GM12878 (cell line): ENCODE measurements at regions of chr4 and their contacts with region 1.

Region 1: DNA sequence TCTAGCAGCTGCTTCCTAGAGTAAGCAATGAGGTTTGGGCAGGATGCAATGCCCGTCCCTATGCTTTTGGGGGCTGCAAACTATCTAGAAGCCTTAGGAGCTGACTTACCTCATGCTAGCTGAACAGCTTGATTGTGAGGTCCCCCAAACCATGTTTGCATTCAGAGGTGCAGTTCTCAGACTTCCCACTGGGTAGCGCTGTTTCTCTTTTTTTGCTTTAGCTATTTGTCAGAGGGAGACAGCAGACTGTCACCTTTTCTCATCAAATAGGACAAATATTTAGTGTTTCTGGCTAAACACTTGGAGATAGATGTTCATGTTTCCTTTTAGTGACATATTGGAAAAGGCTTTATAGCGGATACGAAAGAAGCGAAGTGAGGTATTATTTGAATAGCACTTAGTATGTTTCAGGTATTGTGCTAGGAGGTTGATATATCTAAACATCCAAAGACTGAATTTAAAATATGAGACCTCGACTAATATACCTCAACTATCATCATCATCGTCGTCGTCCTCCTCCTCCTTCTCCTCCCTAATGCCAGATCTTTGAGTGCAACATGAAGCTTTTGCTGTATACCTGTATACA is 18.7 kb upstream of the TMEM192 start:
- DNase-seq: peak; percentile 41
- ATAC-seq: peak; percentile 96
- H3K4me3 ChIP-seq: no peak overlapping the region
- H3K27ac ChIP-seq: no peak overlapping the region
- H3K4me1 ChIP-seq: peaks cover 5% of the 10 kb centered on the region
- H3K27me3 ChIP-seq: peaks cover 0 to 2% of the 10 kb centered on the region in 2 experiments; a peak in 2 of 4 replicates
- CTCF ChIP-seq: peak; percentile 85 to 96 (median 88)
- EP300 ChIP-seq: no peak
- POLR2A ChIP-seq: no peak
- RAD21 ChIP-seq: peak; percentile 100

Region 2: GRCh38 chr4:164229255-164229654 is 902.1 kb before region 1 on chr4:
- CTCF ChIA-PET with region 1: no interaction called
- POLR2A ChIA-PET with region 1: no interaction called
- RAD21 ChIA-PET with region 1: no interaction called
- SMC1A ChIA-PET with region 1: no interaction called
- in situ Hi-C with region 1: no loop called
- intact Hi-C with region 1: no loop called
- DNase-seq: no peak
- ATAC-seq: no peak
- H3K4me3 ChIP-seq: no peak overlapping the region
- H3K27ac ChIP-seq: no peak overlapping the region
- H3K4me1 ChIP-seq: no peaks in the 10 kb centered on the region
- H3K27me3 ChIP-seq: no peaks in the 10 kb centered on the region
- CTCF ChIP-seq: no peak
- EP300 ChIP-seq: no peak
- POLR2A ChIP-seq: no peak
- RAD21 ChIP-seq: no peak

Region 3: GRCh38 chr4:164509951-164510350 is 621.4 kb before region 1 on chr4:
- CTCF ChIA-PET with region 1: no interaction called
- POLR2A ChIA-PET with region 1: no interaction called
- RAD21 ChIA-PET with region 1: no interaction called
- SMC1A ChIA-PET with region 1: no interaction called
- in situ Hi-C with region 1: no loop called
- intact Hi-C with region 1: no loop called
- DNase-seq: no peak
- ATAC-seq: no peak
- H3K4me3 ChIP-seq: no peak overlapping the region
- H3K27ac ChIP-seq: no peak overlapping the region
- H3K4me1 ChIP-seq: no peaks in the 10 kb centered on the region
- H3K27me3 ChIP-seq: no peaks in the 10 kb centered on the region; a peak in 1 of 4 replicates
- CTCF ChIP-seq: no peak
- EP300 ChIP-seq: no peak
- POLR2A ChIP-seq: no peak
- RAD21 ChIP-seq: no peak

Region 4: GRCh38 chr4:164639001-164639400 is 492.3 kb before region 1 on chr4:
- CTCF ChIA-PET with region 1: no interaction called
- POLR2A ChIA-PET with region 1: no interaction called
- RAD21 ChIA-PET with region 1: no interaction called
- SMC1A ChIA-PET with region 1: no interaction called
- in situ Hi-C with region 1: no loop called
- intact Hi-C with region 1: no loop called
- DNase-seq: no peak
- ATAC-seq: no peak
- H3K4me3 ChIP-seq: no peak overlapping the region
- H3K27ac ChIP-seq: no peak overlapping the region
- H3K4me1 ChIP-seq: no peaks in the 10 kb centered on the region
- H3K27me3 ChIP-seq: no peaks in the 10 kb centered on the region
- CTCF ChIP-seq: no peak
- EP300 ChIP-seq: no peak
- POLR2A ChIP-seq: no peak
- RAD21 ChIP-seq: no peak

Region 5: DNA sequence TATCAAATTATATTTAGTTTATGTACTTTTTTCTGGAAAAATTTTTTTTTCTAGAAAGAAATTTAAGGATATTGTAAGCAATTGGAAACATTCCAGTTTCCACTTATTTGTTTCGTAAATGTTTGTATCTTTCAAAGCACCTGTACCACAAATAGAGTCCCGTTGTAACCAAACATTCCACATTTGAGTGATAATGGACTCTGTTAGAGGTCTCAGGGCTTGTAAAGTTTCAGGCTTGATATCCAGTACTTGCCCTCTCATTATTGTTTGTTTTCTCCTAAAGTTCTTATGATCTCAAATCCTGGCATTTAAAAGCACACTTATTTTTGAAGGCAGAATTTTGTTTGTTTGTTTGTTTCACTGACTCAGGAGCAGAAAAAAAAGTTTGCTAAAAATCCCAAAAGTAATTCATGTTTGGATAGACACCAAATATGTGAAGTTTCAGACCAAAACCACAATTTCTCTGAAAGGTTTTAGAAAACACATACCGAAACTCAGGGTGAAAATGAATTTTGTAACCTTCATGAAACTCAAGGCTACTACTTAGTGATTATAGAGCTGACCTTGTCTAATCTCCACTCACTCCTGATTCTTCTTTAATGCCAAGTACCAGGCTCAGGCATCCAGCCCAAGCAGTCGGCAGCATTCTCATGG is 13.0 kb before region 1 on chr4:
- CTCF ChIA-PET with region 1: interaction called, 27 read pairs
- POLR2A ChIA-PET with region 1: no interaction called
- RAD21 ChIA-PET with region 1: interaction called, 11 read pairs
- SMC1A ChIA-PET with region 1: interaction called, 20 read pairs
- in situ Hi-C with region 1: no loop called
- intact Hi-C with region 1: no loop called
- DNase-seq: no peak
- ATAC-seq: peak; percentile 91
- H3K4me3 ChIP-seq: 0 out of 2 replicates have a peak overlapping the region, but pooled peaks have one; percentile 16
- H3K27ac ChIP-seq: no peak overlapping the region
- H3K4me1 ChIP-seq: peaks cover 5% of the 10 kb centered on the region; the same call in 1 of the 2 replicates
- H3K27me3 ChIP-seq: no peaks in the 10 kb centered on the region; a peak in 1 of 4 replicates
- CTCF ChIP-seq: no peak
- EP300 ChIP-seq: no peak
- POLR2A ChIP-seq: no peak
- RAD21 ChIP-seq: no peak

Region 6: DNA sequence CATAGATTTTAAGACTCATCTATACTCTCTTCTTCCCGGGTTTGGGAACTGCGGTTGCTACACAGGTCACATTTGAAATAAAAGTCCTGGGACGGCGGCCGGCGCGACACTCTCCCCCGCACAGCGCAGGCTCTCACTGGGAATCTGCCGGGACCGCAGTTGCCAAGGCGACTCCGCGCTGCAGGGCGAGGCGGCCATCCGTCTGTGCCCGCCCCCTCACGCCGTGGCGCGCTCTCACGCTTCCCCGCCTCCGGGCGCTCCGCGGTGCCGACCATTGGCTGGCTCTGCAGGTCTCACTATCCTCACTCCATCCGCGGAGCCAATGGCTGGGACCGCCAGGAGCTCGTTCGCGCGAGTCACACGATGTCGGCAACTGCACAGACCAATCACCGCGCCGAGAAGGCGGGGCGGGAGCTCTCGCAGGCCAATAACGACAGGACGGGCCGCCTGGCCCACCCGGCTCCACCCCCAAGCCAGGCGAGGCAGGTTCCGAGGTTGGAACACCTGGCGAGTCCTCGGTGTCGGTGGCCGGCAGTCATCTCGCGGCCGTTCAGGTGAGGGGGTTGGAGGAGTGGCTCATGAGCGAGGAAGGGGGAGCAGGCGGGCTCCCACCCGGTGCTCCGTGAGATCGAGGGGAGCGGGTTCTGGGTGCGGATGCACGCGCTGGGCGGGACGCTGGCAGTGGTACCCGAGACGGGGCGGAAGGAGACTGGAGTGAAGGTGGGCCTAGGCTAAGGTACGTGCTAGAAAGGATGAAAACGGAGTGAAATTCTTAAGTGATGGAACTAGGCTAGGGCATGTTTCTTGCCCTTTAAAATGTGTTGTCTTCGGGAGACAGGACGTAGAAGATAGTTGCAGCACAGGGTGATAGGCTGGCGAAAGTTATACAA is 196.1 kb after region 1 on chr4 and contains the start of gene MSMO1:
- CTCF ChIA-PET with region 1: interaction called, 8 read pairs
- POLR2A ChIA-PET with region 1: no interaction called
- RAD21 ChIA-PET with region 1: interaction called, 8 read pairs
- SMC1A ChIA-PET with region 1: no interaction called
- in situ Hi-C with region 1: no loop called
- intact Hi-C with region 1: loop called (anchors 5 kb)
- DNase-seq: peak; percentile 96
- ATAC-seq: peak; percentile 97
- H3K4me3 ChIP-seq: peak within 1 kb of the TSS; percentile 97
- H3K27ac ChIP-seq: peak within 1 kb of the TSS; percentile 70
- H3K4me1 ChIP-seq: peaks cover 4% of the 10 kb centered on the region
- H3K27me3 ChIP-seq: no peaks in the 10 kb centered on the region
- CTCF ChIP-seq: no peak
- EP300 ChIP-seq: no peak
- POLR2A ChIP-seq: peak; percentile 93
- RAD21 ChIP-seq: no peak
- polyA plus RNA-seq, gene MSMO1: 101 to 136 TPM

Region 7: DNA sequence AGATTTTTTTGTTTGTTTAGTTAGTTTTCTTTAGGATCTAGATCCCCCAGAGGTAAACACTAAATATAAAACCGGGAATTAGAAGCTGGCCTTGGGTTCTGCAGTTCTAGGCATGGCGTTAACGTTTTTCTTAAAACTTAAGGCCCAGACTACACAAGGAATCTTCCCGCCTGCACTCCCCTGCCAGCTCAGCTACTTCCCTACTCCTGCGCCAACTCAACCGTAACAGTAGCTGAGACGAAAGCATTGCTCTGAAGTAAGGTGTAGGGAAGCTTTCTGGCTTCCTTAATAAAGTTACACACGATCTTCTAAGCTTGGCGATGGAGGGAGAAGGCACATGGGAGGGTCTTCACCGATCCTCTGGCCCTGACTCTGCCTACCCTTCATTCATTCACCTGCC is 284.6 kb after region 1 on chr4:
- CTCF ChIA-PET with region 1: interaction called, 15 read pairs
- POLR2A ChIA-PET with region 1: no interaction called
- RAD21 ChIA-PET with region 1: no interaction called
- SMC1A ChIA-PET with region 1: no interaction called
- in situ Hi-C with region 1: no loop called
- intact Hi-C with region 1: no loop called
- DNase-seq: no peak
- ATAC-seq: no peak
- H3K4me3 ChIP-seq: no peak overlapping the region
- H3K27ac ChIP-seq: no peak overlapping the region
- H3K4me1 ChIP-seq: no peaks in the 10 kb centered on the region
- H3K27me3 ChIP-seq: no peaks in the 10 kb centered on the region
- CTCF ChIP-seq: no peak
- EP300 ChIP-seq: no peak
- POLR2A ChIP-seq: no peak
- RAD21 ChIP-seq: no peak

Region 8: DNA sequence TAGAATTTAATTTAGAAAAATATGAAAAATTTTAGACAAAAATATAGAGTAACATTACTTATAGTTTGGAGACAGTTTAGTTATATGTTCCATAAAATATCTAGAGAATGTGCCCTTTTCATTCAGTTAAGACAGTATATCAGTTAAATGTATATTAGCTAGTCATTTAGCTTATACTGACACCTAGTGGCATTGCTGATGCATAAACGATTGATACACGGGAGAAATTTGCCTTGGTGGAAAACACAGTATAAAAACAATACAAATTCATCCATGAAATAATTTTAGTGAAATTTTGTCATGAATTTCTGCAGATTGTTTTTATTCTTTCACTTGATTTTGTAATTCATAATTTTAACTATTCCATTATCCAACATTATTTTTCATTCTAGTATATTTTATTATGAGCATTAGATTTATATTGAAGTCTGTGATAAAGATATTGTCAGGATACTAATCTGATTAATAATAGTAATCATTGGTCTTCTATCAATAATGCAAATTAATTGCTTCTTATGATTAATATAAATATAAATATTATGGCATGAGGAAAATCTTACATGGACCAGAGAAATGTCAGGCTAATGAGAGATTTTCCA is 960.7 kb after region 1 on chr4:
- CTCF ChIA-PET with region 1: interaction called, 6 read pairs
- POLR2A ChIA-PET with region 1: no interaction called
- RAD21 ChIA-PET with region 1: no interaction called
- SMC1A ChIA-PET with region 1: no interaction called
- in situ Hi-C with region 1: loop called (anchors 25 kb)
- intact Hi-C with region 1: no loop called
- DNase-seq: no peak
- ATAC-seq: peak; percentile 78
- H3K4me3 ChIP-seq: no peak overlapping the region
- H3K27ac ChIP-seq: no peak overlapping the region
- H3K4me1 ChIP-seq: no peaks in the 10 kb centered on the region
- H3K27me3 ChIP-seq: no peaks in the 10 kb centered on the region
- CTCF ChIP-seq: peak; percentile 57 to 64 (median 63); a peak in 5 of 6 replicates
- EP300 ChIP-seq: no peak
- POLR2A ChIP-seq: no peak
- RAD21 ChIP-seq: peak; percentile 71